ENCODE measurements at regions of chr2 and their contacts with region 1.

Region 1: DNA sequence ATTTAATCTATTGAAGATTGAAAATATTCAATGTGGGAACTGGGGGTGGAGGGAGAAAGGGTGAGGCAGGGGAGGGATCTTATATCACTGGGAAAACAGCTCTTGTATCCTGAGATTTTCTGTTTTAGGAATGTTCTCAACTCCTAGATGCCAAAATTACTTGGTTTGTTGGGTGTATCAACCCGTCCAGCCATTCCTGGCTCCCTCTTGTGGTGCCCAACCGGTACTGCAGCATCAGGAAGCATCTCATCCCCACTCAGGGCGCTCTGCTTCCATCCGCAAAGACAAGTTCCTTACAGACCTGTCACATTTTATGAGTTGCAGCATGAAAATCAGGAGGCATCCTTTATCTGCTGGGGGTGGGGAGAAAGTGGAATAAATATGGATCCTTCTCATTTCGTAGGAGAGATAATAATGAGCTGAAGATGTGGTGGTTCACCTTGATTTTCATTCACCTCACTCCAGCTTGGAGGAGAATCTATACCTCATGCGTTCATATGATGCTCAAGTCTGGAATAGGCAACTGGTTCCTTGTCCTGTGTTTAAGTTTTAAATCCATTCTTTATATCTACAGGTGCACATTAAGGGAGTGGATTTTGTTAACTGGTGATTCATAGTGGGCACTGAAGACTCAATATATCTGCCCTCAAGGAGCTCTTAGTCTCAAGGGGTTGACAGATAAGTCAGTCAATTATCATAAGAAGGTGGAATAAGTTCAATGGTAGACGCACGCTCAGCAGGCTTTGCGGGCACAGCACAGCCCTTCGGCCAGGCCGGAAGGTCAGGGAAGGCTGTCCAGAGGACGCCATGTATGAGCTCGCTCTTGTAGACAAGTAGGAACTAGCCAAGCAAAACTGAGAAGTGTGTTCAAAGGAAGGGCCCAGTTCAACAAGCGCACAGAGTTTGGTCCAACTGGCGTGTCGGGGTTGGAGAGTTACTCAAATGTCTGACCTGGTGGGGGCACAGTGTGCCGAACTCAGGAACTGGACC is 127.3 kb downstream of the RNF144A start:
- DNase-seq: peak; percentile 74
- ATAC-seq: peak; percentile 76
- H3K4me3 Mint-ChIP-seq: no peak overlapping the region
- H3K27ac Mint-ChIP-seq: no peak overlapping the region
- H3K4me1 Mint-ChIP-seq: peaks cover 30% of the 10 kb centered on the region
- H3K27me3 Mint-ChIP-seq: no peaks in the 10 kb centered on the region

Region 2: DNA sequence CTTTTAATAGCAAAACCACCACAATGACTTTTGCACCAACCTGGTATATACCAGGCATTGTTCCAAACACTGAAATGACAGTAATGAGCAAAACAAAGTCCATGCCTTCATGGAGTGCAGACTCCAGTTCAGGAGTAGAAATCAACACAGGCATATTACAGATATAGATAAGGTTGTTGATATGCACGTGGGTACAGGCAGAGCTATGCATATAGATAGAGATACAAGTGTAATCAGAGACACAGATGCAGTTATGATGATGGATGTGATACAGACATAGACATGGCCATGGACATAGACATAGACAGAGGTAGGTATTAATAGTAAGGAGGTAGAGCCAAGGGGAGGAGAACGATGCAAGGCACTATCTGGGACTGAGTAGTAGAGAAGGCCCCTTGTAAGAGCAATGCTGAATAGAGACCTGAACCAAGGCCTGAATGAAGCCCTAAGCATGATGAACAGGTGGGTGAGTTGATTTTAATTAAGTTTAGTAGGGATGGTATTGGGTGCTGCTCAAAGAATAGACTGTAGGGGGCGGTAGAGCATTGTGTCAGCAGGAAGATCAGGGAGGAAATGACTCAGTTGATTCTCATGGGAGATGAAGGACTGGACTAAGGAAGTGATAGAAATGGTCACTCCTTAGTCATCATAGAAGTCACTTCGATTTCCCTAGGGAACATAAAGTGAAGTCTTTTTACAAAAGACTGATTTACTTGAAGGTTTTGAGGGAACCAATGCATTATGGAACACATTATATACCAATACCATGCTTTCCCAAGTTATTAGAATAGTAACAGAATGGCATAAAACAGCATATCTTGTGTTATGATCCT is 218.3 kb before region 1 on chr2:
- CTCF ChIA-PET with region 1: interaction called, 11 read pairs
- POLR2A ChIA-PET with region 1: no interaction called
- intact Hi-C with region 1: loop called (anchors 1 kb)
- DNase-seq: peak; percentile 78
- ATAC-seq: peak; percentile 97
- H3K4me3 Mint-ChIP-seq: no peak overlapping the region
- H3K27ac Mint-ChIP-seq: no peak overlapping the region
- H3K4me1 Mint-ChIP-seq: peaks cover 9% of the 10 kb centered on the region
- H3K27me3 Mint-ChIP-seq: no peaks in the 10 kb centered on the region

Region 3: DNA sequence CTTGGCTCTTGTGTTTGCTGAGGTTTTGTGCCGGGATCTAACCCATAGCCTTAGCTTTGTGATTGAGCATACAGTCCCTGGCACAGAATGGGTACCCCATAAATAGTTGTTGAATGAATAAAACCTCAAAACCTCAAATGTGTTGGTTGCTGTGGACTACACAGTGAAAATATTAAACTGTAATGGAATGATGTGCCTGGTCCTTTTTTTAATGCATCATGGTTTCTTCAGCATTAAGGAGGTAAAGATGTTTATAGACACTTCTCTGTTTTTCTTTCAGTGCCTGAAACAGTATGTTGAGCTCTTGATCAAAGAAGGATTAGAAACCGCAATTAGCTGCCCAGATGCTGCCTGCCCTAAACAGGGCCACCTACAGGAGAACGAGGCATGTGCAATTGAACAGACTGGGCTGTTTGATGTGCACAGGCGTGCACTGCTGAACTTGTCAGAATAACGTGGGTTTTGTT is 30.3 kb before region 1 on chr2:
- CTCF ChIA-PET with region 1: interaction called, 11 read pairs
- POLR2A ChIA-PET with region 1: no interaction called
- intact Hi-C with region 1: no loop called
- DNase-seq: peak; percentile 43
- ATAC-seq: peak; percentile 39
- H3K4me3 Mint-ChIP-seq: no peak overlapping the region
- H3K27ac Mint-ChIP-seq: peak overlapping the region; percentile 27
- H3K4me1 Mint-ChIP-seq: peaks cover 40% of the 10 kb centered on the region
- H3K27me3 Mint-ChIP-seq: no peaks in the 10 kb centered on the region

Region 4: DNA sequence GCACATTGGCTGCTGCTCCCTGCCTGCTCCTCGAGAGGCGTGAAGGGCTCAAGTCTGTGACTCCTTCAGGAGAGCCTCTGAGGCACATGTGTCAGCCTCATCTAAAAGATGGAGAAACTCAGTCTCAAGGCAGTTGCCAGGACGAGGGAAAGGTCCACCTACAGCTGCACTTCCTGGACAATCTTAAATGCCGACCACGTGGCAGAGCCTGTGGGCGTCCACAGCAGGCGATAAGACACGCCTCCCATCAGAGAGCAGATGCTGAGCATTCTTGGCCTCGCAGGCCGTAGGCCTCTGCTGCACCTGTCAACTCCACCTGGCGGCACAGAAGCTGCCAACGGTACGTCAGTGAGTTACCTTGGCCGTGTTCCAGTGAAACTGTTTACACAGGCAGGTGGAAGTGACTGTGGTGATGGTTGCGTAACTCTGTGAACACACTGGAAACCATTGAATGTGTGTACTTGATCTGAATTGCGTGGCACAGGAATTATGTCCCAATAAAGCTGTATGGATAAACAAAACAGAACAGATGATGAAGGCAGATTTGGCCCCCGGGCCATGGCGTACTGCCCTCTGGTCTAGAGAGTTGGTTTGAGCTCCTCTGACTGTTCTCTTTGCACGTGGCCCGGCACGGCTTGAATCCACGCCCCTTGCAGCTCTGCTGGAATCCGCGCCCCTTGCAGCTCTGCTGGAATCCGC is 12.9 kb before region 1 on chr2:
- CTCF ChIA-PET with region 1: interaction called, 25 read pairs
- POLR2A ChIA-PET with region 1: no interaction called
- intact Hi-C with region 1: no loop called
- DNase-seq: peak; percentile 48
- ATAC-seq: peak; percentile 68
- H3K4me3 Mint-ChIP-seq: no peak overlapping the region
- H3K27ac Mint-ChIP-seq: peak overlapping the region; percentile 53
- H3K4me1 Mint-ChIP-seq: peaks cover 11% of the 10 kb centered on the region
- H3K27me3 Mint-ChIP-seq: no peaks in the 10 kb centered on the region

Region 5: DNA sequence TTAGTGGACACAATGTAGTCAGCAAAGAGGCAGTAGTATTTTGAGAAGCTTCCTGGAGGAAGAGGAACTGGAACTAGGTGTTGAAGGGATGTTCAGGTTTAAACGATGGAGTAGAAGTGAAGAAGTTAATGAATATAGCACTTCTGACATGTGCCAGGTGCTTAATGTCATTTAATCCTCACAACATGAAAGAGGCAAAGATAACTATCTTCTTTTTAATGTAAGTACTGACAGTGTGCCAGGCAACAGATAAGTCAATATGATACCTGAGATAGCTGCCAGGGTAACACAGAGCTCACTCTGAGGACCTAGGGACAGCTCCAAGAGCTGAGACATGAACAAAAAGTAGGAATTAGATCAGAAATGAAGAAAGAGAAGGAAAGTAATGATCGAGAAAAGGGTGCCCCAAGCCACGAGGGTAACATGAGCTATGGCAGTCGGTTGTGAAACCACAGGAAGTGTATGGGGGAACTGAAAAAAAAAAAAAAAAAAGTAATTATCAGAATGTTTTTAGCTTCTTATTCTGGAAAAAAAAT is 13.4 kb after region 1 on chr2:
- CTCF ChIA-PET with region 1: interaction called, 34 read pairs
- POLR2A ChIA-PET with region 1: no interaction called
- intact Hi-C with region 1: no loop called
- DNase-seq: peak; percentile 22
- ATAC-seq: peak; percentile 46
- H3K4me3 Mint-ChIP-seq: peak overlapping the region; percentile 40
- H3K27ac Mint-ChIP-seq: peak overlapping the region; percentile 82
- H3K4me1 Mint-ChIP-seq: peaks cover 18% of the 10 kb centered on the region
- H3K27me3 Mint-ChIP-seq: no peaks in the 10 kb centered on the region

Region 6: DNA sequence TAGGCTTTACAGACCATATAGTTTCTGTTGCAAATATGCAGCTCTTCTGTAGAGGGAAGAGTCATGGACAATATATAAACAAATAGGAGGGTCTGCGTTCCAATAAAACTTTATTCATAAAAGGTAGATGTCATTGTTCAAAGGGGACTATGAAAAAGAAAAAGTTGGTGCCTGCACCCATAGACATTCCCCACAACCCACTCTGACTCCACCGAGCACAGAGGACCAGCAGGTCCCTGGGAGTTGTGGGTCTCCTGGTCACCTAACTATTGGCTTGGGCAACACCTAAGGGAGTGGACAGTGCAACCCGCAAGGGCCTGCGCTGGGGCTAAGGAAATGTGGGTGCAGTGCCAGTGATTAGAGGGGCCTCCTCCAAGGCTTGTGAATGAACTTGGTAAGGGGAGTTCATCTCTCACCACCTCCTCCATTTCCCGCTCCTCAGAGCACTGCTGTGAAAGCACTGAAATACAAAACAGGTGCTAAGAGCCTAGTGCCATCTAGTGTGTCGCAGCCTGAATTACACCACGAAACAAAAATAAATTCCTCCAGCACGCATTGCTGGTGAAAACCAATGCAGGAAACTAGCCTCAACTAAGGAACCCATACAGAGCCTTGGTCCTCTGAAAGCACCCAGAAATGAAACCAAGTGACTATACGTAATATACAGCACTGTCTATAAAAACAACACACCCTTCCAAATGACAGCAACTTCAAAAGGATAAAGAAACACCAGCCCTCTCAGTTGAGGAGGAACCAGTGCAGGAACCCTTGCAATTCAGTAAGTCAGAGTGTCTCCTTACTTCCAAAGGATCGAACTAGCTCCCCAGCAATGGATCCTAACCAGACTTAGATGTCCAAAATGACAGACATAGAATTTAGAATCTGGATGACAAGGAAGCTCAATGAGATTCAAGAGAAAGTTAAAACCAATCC is 39.3 kb after region 1 on chr2:
- CTCF ChIA-PET with region 1: interaction called, 3 read pairs
- POLR2A ChIA-PET with region 1: no interaction called
- intact Hi-C with region 1: loop called in 1 of 2 experiments (anchors 2 kb)
- DNase-seq: peak; percentile 42
- ATAC-seq: peak; percentile 60
- H3K4me3 Mint-ChIP-seq: no peak overlapping the region
- H3K27ac Mint-ChIP-seq: no peak overlapping the region
- H3K4me1 Mint-ChIP-seq: no peaks in the 10 kb centered on the region
- H3K27me3 Mint-ChIP-seq: no peaks in the 10 kb centered on the region

Measured in activated CD4-positive, alpha-beta T cell treated with anti-CD3 and anti-CD28 coated beads for 36 hours (primary cell).